ENCODE measurements at regions of chr12 and their contacts with region 1.

Region 1: DNA sequence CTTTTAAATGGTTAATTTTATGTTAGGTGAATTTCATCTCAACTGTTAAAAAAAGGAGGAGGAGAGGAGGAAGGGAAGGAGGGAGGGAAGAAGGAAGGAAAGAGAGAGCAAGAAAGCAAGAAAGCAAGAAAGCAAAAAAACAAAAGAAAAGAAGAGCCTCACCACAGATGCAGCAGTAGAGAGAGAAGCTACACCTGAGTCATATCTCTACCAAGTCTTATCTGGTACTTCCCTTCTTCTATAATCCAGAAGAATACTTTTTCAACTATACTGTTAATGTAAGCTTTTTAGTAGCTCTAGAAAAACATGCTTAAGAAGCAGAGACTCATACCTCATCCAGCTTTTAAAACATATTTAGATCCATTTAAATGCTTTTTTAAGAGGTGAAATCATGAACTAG is 5.6 kb upstream of the IL26 start:
- DNase-seq: no peak
- ATAC-seq: no peak
- H3K4me3 ChIP-seq: no peak overlapping the region
- H3K27ac ChIP-seq: no peak overlapping the region
- H3K4me1 ChIP-seq: no peaks in the 10 kb centered on the region
- H3K27me3 ChIP-seq: no peaks in the 10 kb centered on the region

Region 2: DNA sequence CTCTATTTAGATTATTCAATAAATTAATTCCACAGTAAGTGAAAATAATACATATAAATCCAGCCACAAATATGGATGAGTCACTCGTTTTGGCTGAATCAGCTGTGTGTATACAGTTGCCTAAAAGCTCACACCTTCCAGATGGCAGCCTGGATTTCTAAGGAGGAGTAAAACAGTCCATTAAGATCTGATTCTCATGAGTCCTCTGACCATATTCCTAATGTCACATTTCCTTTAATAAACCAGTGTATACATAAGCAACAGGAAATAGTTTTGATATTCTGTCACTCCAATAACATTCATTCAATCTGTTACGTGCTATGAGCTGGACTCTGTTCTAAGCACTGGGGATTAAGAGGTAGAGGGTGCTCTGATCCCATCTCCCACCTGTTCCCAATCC is 79.1 kb after region 1 on chr12:
- intact Hi-C with region 1: loop called in 1 of 4 experiments (anchors 5 kb)
- DNase-seq: no peak
- ATAC-seq: no peak
- H3K4me3 ChIP-seq: no peak overlapping the region
- H3K27ac ChIP-seq: no peak overlapping the region
- H3K4me1 ChIP-seq: no peaks in the 10 kb centered on the region
- H3K27me3 ChIP-seq: no peaks in the 10 kb centered on the region